ENCODE measurements at regions of chr10 and their contacts with region 1.

Region 1: DNA sequence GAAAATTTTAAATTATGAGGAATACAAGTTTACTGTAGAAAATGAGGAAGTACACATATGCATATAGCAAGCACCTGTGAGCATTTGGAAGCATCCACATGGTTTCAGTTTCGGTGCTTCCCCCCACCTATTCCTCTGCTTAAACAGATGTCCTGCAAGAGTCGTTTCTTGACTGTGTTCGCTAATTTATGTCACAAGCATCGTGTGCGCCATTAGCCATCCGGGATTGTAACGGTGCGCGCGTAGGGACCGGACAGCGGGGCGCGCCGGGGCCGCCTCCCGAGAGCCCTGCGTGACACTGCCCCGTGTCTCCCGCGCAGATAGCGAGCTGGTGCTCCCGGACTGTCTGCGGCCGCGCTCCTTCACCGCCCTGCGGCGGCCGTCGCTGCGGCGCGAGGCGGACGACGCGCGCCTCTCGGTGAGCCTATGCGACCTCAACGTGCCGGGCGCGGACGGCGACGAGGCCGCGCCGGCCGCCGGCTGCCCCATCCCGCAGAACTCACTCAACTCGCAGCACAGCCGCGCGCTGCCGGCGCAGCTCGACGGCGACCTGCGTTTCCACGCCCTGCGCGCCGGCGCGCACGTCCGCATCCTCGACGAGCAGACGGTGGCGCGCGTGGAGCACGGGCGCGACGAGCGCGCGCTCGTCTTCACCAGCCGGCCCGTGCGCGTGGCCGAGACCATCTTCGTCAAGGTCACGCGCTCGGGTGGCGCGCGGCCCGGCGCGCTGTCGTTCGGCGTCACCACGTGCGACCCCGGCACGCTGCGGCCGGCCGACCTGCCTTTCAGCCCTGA is 90.9 kb downstream of the NEURL1 start:
- DNase-seq: no peak
- H3K4me3 ChIP-seq: peak overlapping the region; percentile 41
- H3K27me3 ChIP-seq: peaks cover 11% of the 10 kb centered on the region
- CTCF ChIP-seq: no peak

Region 2: GRCh38 chr10:103911021-103911459 is 326.6 kb after region 1 on chr10:
- CTCF ChIA-PET with region 1: no interaction called
- POLR2A ChIA-PET with region 1: interaction called, 11 read pairs
- DNase-seq: no peak
- H3K4me3 ChIP-seq: no peak overlapping the region
- H3K27me3 ChIP-seq: no peaks in the 10 kb centered on the region
- CTCF ChIP-seq: no peak

Measured in BJ (cell line).